Posterior vena cava (tissue), 2 donors: ENCODE measurements at regions of chr12 and their contacts with region 1.

Region 1: DNA sequence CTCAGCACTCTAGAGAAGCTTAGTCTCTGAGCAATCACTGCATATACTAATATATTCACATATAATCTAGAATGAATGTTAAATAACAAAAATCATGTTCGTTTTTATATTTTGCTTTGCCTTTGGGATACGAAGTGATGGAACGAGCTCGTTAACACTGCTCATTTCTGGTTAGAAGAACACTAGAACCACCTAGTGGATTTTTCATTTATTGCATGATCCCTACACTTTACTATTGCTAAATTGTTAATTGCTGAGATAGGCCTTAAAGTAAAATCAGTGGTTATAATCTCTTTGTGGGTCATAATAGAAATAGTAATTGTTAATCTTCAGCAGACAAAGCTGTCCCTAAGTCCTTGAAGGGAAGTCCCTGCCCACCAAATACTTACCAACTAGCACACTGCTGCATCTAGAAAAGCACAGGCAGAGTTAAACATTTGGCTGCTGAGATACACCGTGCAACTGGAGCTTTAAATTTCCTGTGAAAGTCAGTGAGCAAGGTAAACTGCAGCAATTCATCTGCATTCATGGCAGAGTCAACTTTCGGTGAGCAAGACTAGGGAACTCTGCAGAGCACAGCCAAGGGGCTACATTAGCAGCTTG is 353.7 kb downstream of the APAF1 start:
- DNase-seq: no peak

Region 2: DNA sequence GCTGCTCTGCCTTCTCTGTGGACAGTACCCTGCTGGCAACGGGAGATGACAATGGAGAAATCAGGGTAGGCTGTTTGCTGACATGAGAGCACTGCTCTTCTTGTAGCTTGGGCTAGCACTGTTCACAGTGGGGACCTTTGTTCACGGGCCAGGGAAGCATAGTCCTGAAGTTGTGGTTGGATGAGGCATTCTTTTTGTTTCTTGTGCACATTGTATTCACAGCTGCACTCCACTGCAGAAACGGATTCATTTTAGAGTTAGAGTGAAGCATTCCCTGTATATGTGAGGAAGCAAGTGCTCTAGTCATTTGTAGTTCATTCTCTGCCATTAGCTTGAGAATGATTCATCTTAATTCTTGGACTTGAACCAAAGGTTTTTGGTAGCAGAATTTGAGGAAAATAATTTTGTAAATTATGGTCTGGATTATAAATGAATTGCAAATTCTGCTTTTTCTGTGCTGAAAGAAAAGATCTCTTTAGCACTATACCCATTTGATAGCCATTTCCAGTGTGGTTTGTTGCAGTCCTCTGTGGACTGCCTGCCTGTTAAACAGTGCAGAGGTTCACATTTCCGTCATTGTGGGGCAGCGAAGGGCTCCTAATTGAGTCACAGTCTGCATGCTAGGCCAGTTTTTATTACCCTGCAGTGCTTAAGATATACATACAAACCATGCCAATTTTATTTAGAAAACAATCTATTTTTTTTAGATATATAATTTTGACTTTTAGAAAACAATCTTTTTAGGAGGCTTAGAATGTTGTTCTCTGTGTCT is 273.1 kb before region 1 on chr12:
- intact Hi-C with region 1: loop called in 1 of 2 experiments (anchors 10 kb)
- DNase-seq: no peak